ENCODE measurements at regions of chr4 and their contacts with region 1.

Region 1: GRCh38 chr4:81421346-81422218 is 50.1 kb downstream of the RASGEF1B start:
- DNase-seq: no peak
- H3K4me3 Mint-ChIP-seq: no peak overlapping the region
- H3K27ac Mint-ChIP-seq: no peak overlapping the region
- H3K4me1 Mint-ChIP-seq: peaks cover 7% of the 10 kb centered on the region
- H3K27me3 Mint-ChIP-seq: no peaks in the 10 kb centered on the region

Region 2: DNA sequence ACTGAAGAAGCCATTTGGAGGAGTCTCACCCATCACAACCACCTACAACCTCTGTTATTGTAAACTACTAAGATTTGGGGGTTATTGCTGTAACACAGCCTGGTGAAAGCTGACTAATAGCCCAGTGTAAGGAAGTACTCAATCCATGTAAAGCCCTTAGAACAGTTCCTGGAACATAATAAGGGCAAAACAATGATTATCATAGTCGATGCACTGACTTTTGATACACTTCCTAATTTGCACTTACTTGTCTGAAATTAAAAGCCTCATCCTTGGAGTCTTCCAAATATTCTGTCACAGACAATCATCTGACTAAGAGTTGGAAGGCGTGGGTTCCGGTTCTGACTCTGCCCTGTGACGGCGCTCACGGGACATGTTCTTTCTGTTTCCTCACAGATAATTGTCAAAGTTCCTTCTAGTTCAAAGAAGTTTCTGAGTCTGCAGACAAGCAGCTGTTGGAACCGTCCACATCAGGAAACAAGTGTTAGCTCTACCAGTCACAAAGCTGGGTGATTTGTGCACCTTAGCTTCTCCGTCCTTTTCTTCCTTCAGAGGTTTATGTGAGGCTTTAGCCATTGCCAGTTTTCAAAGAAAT is 83.5 kb after region 1 on chr4:
- intact Hi-C with region 1: loop called (anchors 5 kb)
- DNase-seq: peak; percentile 88
- H3K4me3 Mint-ChIP-seq: peak overlapping the region; percentile 61
- H3K27ac Mint-ChIP-seq: peak overlapping the region; percentile 23
- H3K4me1 Mint-ChIP-seq: peaks cover 29% of the 10 kb centered on the region
- H3K27me3 Mint-ChIP-seq: peaks cover 9% of the 10 kb centered on the region

Region 3: DNA sequence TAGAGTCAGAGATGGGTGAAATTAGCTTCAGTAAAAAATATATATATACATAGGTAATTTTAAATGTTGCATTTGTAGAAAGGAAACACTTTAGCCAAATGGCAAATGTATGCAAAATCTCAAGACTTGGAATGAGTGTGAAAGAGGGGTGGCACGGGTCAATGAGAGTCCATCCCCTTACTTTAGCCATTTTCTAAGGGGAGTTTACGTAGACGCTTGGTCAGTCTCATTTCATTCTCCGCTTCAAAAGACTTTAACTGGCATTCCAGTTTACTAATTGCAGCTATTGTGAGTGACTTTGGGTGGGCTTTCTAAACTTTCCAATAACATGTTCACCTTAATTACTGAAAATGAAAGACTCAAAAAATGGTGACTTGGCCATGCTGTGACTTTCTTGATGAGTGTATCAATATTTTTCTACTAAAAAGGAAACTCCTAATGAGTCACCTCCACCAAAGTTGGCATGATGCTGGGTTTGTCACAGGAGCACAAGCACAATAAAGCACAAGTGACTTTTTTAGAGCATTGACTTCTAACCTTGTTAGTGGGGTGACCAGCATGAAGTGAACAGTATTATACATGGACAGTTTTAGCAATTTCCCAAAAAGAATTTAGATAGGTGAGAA is 406.1 kb after region 1 on chr4:
- intact Hi-C with region 1: loop called (anchors 5 kb)
- DNase-seq: no peak
- H3K4me3 Mint-ChIP-seq: no peak overlapping the region
- H3K27ac Mint-ChIP-seq: peak overlapping the region; percentile 71
- H3K4me1 Mint-ChIP-seq: peaks cover 9% of the 10 kb centered on the region
- H3K27me3 Mint-ChIP-seq: no peaks in the 10 kb centered on the region

Region 4: GRCh38 chr4:82379964-82380733 is 958.6 kb after region 1 on chr4:
- intact Hi-C with region 1: no loop called
- DNase-seq: no peak
- H3K4me3 Mint-ChIP-seq: no peak overlapping the region
- H3K27ac Mint-ChIP-seq: no peak overlapping the region
- H3K4me1 Mint-ChIP-seq: peaks cover 16% of the 10 kb centered on the region
- H3K27me3 Mint-ChIP-seq: peaks cover 4% of the 10 kb centered on the region

Measured in activated CD4-positive, alpha-beta T cell treated with anti-CD3 and anti-CD28 coated beads, Interleukin-2, amount 10 ng/mL, durations not matched to agents 24 days and 14 days (primary cell).